ENCODE measurements at regions of chr14 and their contacts with region 1.

Region 1: GRCh38 chr14:106738075-106738474 is 1211.7 kb downstream of the TMEM121 start:
- DNase-seq: peak; percentile 31
- H3K4me3 Mint-ChIP-seq: no peak overlapping the region
- H3K27ac Mint-ChIP-seq: no peak overlapping the region
- H3K4me1 Mint-ChIP-seq: peaks cover 9% of the 10 kb centered on the region
- H3K27me3 Mint-ChIP-seq: no peaks in the 10 kb centered on the region

Region 2: DNA sequence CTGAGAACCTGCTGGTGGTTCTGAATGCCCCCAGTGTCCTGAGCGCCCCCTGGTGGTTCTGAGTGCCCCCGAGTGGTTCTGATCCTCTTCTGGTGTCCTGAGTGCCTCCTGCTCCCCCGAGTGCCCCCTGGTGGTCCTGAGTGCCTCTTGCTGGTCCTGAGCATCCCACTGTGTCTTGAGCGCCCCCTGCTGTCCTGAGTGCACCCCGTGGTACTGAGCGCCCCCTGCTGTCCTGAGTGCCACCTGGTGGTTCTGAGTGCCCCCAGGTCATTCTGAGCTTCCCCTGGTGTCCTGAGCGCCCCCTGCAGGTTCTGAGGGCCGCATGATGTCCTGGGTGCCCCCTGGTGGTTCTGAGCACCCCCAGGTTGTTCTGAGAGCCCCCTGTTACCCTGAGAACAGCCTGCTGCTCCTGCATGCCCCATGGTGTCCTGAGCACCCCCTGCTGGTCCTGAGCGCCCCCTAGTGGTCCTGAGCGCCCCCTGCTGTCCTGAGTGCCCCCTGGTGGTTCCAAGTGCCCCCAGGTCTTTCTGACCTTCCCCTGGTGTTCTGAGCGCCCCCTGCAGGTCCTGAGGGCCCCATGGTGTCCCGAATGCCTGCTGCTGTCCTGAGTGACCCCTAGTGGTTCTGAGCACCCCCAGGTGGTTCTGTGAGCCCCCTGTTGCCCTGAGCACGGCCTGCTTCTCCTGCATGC is 46.3 kb before region 1 on chr14:
- CTCF ChIA-PET with region 1: interaction called, 20 read pairs
- intact Hi-C with region 1: loop called (anchors 5 kb)
- DNase-seq: peak; percentile 88
- H3K4me3 Mint-ChIP-seq: no peak overlapping the region
- H3K27ac Mint-ChIP-seq: no peak overlapping the region
- H3K4me1 Mint-ChIP-seq: peaks cover 17% of the 10 kb centered on the region
- H3K27me3 Mint-ChIP-seq: no peaks in the 10 kb centered on the region

Measured in activated naive CD4-positive, alpha-beta T cell treated with anti-CD3 and anti-CD28 coated beads for 36 hours (primary cell).